ENCODE measurements at regions of chr3 and their contacts with region 1.

Region 1: DNA sequence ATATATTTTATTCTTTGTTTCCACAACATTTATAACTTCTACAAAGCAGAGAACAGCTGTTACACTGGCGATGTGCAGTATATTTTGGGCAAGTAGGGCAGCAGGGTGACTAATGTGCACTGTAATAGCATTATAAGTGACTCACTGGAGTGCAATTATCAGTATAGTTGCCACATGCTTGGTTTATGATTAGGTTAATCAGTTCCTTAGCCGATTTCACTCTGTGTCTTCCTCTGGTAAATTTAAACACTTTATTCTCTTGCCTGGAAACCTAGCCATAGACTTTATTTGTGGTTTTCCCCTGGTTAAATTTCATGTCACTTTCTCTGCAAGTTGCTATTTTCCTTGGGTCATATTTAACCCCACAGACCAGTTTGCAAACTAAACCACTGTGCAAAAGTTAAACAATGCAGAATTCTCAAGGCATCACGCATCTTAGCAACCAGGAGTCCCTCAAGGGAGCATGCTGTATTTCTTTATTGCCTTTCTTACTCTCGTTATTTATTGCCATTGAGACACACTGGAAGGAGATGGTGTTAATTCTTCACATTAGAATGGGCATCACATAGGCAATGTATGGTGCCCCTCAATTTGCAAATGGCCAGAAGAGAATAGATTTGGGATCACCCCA is 690.2 kb upstream of the DPPA4 start:
- DNase-seq: no peak
- H3K4me3 ChIP-seq: no peak overlapping the region
- H3K4me3 Mint-ChIP-seq: no peak overlapping the region
- H3K27ac Mint-ChIP-seq: no peak overlapping the region
- H3K4me1 ChIP-seq: no peaks in the 10 kb centered on the region
- H3K4me1 Mint-ChIP-seq: no peaks in the 10 kb centered on the region
- H3K27me3 ChIP-seq: no peaks in the 10 kb centered on the region
- H3K27me3 Mint-ChIP-seq: no peaks in the 10 kb centered on the region
- CTCF ChIP-seq: no peak

Region 2: GRCh38 chr3:109994853-109995252 is 32.7 kb before region 1 on chr3:
- CTCF ChIA-PET with region 1: no interaction called
- POLR2A ChIA-PET with region 1: no interaction called
- intact Hi-C with region 1: no loop called
- DNase-seq: no peak
- H3K4me3 ChIP-seq: no peak overlapping the region
- H3K4me3 Mint-ChIP-seq: no peak overlapping the region
- H3K27ac Mint-ChIP-seq: no peak overlapping the region
- H3K4me1 ChIP-seq: no peaks in the 10 kb centered on the region
- H3K4me1 Mint-ChIP-seq: peaks cover under 1% of the 10 kb centered on the region
- H3K27me3 ChIP-seq: no peaks in the 10 kb centered on the region
- H3K27me3 Mint-ChIP-seq: peaks cover 2% of the 10 kb centered on the region
- CTCF ChIP-seq: no peak

Region 3: GRCh38 chr3:110165744-110166143 is 138.2 kb after region 1 on chr3:
- CTCF ChIA-PET with region 1: no interaction called
- POLR2A ChIA-PET with region 1: no interaction called
- intact Hi-C with region 1: no loop called
- DNase-seq: no peak
- H3K4me3 ChIP-seq: no peak overlapping the region
- H3K4me3 Mint-ChIP-seq: no peak overlapping the region
- H3K27ac Mint-ChIP-seq: no peak overlapping the region
- H3K4me1 ChIP-seq: 0 out of 2 replicates have a peak, but pooled peaks cover 3% of the 10 kb centered on the region
- H3K4me1 Mint-ChIP-seq: peaks cover 15% of the 10 kb centered on the region
- H3K27me3 ChIP-seq: no peaks in the 10 kb centered on the region
- H3K27me3 Mint-ChIP-seq: no peaks in the 10 kb centered on the region
- CTCF ChIP-seq: no peak

Region 4: GRCh38 chr3:110436209-110436608 is 408.6 kb after region 1 on chr3:
- CTCF ChIA-PET with region 1: no interaction called
- POLR2A ChIA-PET with region 1: no interaction called
- intact Hi-C with region 1: no loop called
- DNase-seq: no peak
- H3K4me3 ChIP-seq: no peak overlapping the region
- H3K4me3 Mint-ChIP-seq: no peak overlapping the region
- H3K27ac Mint-ChIP-seq: no peak overlapping the region
- H3K4me1 ChIP-seq: peaks cover 22% of the 10 kb centered on the region
- H3K4me1 Mint-ChIP-seq: peaks cover 9% of the 10 kb centered on the region
- H3K27me3 ChIP-seq: no peaks in the 10 kb centered on the region
- H3K27me3 Mint-ChIP-seq: no peaks in the 10 kb centered on the region
- CTCF ChIP-seq: no peak

Region 5: DNA sequence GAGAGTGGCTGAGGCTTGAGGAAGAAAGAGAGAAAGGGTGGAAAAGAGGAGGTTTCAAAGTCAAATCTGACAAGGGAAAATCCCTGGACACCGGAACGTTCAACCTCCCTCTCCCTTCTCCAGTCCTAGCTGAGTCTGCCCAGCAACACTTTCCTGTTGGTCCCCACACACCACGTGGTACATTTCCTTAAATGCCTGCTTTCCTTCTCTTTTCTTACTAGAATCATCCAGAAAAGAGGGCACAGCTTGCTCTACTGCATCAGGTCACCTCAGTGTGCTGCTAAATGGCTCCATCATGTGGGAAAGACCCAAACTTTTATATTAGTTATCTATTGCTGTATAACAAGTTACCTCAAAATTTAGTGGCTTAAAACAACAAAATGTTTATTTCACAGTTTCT is 1225.2 kb after region 1 on chr3:
- CTCF ChIA-PET with region 1: interaction called, 13 read pairs
- POLR2A ChIA-PET with region 1: no interaction called
- intact Hi-C with region 1: no loop called
- DNase-seq: peak; percentile 18 to 38
- H3K4me3 ChIP-seq: no peak overlapping the region
- H3K4me3 Mint-ChIP-seq: no peak overlapping the region
- H3K27ac Mint-ChIP-seq: no peak overlapping the region
- H3K4me1 ChIP-seq: no peaks in the 10 kb centered on the region
- H3K4me1 Mint-ChIP-seq: no peaks in the 10 kb centered on the region
- H3K27me3 ChIP-seq: no peaks in the 10 kb centered on the region
- H3K27me3 Mint-ChIP-seq: peaks cover 3% of the 10 kb centered on the region
- CTCF ChIP-seq: no peak